ENCODE measurements at regions of chr1 and their contacts with region 1.

Region 1: DNA sequence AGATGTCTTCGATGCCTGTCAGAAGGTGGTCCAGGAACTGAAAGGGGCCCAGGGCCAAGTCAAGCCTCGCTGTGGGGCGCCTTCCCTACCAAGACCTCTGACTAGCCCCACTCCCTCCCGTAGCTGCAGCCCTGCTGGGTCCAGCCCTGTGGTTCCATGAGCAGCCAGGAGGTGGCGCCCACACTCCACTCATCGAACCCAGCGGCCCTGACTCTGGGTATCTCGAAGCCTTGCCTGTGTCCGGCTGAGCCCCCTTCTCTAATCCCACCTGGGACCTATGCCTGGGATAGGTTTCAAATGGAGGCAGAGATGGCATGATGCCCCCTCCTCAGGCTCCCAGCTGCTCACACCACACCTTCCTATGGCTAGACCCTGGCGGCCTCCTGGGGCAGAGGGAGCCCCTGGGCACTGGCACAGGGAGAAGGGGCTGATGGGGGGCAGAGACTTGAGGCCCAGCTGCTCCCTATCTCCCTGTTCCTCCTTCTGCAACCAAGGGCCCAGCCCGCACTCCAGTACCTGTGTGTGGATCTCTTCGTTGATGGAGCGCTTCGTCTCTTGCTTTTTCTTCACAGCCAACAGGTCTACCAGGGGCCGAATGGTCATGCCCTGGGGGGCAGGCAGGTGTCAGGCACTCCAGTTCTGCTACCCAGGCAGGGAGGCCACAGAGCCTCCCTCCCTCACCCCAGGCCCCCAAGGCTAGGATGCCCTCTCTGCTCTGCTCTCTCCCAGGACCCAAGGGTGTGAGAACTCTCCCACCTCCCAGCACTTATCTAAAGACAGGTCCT is 52.0 kb downstream of the SLC9A1 start:
- DNase-seq: peak; percentile 85 to 90 (median 88)
- ATAC-seq: peak; percentile 89
- H3K4me3 ChIP-seq: no peak overlapping the region
- H3K27ac ChIP-seq: no peak overlapping the region
- H3K4me1 ChIP-seq: peaks cover 18 to 57% of the 10 kb centered on the region in 2 experiments
- H3K27me3 ChIP-seq: no peaks in the 10 kb centered on the region; a peak in 1 of 5 replicates
- CTCF ChIP-seq: peak; percentile 97 to 99 (median 97)
- EP300 ChIP-seq: no peak
- POLR2A ChIP-seq: no peak
- RAD21 ChIP-seq: peak; percentile 95 to 98

Region 2: DNA sequence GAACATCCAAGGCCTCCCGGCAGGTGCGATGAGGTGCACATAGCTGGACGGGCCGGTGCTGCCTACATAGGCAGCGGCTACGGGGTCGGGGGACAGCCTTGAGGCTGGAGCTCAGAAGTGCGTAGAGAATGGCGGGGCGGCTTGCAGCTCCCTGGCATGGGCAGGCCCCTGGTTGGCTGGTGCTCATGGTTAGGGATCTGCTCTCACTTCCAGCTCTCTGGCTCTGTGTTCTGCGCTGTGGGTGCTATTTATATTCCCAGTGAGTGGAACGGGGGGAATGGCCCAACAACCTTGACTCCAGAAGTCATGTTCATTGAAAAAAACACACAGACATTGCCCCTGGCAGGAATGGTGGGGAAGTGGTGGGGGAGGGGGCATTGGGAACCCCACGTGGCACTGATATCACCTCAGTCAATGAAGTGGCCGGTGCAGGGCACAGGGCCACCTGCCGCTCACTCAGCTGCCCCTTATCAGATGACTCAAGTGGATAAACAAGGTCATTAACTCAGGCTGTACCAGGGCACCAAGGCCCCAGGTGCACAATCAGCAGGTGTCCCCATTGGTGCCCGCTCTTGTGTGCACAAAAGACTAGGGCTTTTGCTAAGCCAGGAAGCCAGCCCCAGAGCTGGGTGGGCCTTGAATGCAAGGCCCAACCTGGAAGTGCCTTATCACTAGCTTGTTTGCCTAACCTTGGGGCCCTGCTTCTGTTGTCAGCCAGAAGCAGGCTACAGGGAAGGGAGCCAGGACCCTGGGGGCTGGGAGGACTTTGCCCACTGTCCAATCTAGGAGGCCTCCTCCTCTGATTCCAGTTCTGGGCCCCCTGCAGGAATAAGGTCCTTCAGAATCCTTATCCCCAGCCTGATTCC is 188.9 kb before region 1 on chr1 and contains the start of gene NR0B2:
- CTCF ChIA-PET with region 1: no interaction called
- POLR2A ChIA-PET with region 1: no interaction called
- in situ Hi-C with region 1: no loop called
- intact Hi-C with region 1: no loop called
- DNase-seq: peak; percentile 65 to 85 (median 74)
- ATAC-seq: peak; percentile 88
- H3K4me3 ChIP-seq: no peak within 1 kb of the TSS
- H3K27ac ChIP-seq: peak within 1 kb of the TSS; percentile 69
- H3K4me1 ChIP-seq: peaks cover 28 to 31% of the 10 kb centered on the region in 2 experiments
- H3K27me3 ChIP-seq: no peaks in the 10 kb centered on the region
- CTCF ChIP-seq: no peak
- EP300 ChIP-seq: peak; percentile 55; the same call in 1 of the 2 replicates
- POLR2A ChIP-seq: no peak
- RAD21 ChIP-seq: peak in 1 of 2 experiments; percentile 8; a peak in 1 of 4 replicates
- polyA plus RNA-seq, gene NR0B2: not detected

Region 3: GRCh38 chr1:27086026-27086425 is 16.9 kb before region 1 on chr1:
- CTCF ChIA-PET with region 1: no interaction called
- POLR2A ChIA-PET with region 1: no interaction called
- in situ Hi-C with region 1: no loop called
- intact Hi-C with region 1: no loop called
- DNase-seq: peak in 1 of 4 experiments; percentile 26
- ATAC-seq: no peak
- H3K4me3 ChIP-seq: no peak overlapping the region
- H3K27ac ChIP-seq: no peak overlapping the region
- H3K4me1 ChIP-seq: no peaks in the 10 kb centered on the region
- H3K27me3 ChIP-seq: peaks cover 3 to 4% of the 10 kb centered on the region in 2 experiments; a peak in 3 of 5 replicates
- CTCF ChIP-seq: no peak
- EP300 ChIP-seq: no peak
- POLR2A ChIP-seq: no peak
- RAD21 ChIP-seq: no peak

Region 4: GRCh38 chr1:27203946-27204345 is 101.0 kb after region 1 on chr1:
- CTCF ChIA-PET with region 1: interaction called, 3 read pairs
- POLR2A ChIA-PET with region 1: no interaction called
- in situ Hi-C with region 1: no loop called
- intact Hi-C with region 1: loop called (anchors 2 kb)
- DNase-seq: no peak
- ATAC-seq: no peak
- H3K4me3 ChIP-seq: no peak overlapping the region
- H3K27ac ChIP-seq: no peak overlapping the region
- H3K4me1 ChIP-seq: peaks cover 4 to 6% of the 10 kb centered on the region in 2 experiments; a peak in 4 of 5 replicates
- H3K27me3 ChIP-seq: peaks cover 0 to 7% of the 10 kb centered on the region in 2 experiments; a peak in 1 of 5 replicates
- CTCF ChIP-seq: no peak
- EP300 ChIP-seq: no peak
- POLR2A ChIP-seq: no peak
- RAD21 ChIP-seq: no peak